ENCODE measurements at regions of chr12 and their contacts with region 1.

Region 1: DNA sequence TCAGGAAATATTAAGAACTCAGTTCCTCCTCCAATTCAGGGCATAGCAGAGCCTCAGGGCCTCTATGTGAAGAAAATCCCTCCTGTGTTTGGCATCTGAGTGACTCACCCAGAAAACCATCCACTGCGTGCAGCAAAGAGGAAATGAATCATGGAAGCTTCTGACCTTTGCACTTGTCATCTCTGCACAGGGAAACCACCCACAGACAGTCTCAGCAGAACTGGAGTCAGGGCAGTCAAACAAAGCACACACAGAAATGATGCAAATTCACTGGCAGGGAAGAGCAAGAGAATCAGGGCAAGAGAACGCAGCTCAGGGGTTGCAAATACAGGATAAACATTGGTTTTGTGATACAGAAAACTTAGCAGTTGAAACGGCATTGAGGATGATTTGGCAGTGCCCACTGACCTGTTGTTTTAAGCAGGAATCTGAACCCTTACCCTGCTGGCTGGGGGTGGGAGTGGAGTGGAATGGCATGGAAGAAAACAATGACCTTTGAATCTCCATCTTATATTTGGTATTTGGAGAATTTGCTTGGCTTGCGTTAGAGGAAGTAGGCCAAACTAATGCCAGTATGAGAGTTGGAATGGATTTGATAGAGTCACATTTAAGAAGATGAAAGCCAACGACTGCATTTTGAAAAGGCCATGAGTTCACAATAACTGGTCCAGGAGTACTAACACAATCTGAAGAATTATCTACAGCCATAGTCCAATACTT is 53.5 kb downstream of the PHLDA1 start:
- DNase-seq: peak; percentile 86
- H3K4me3 Mint-ChIP-seq: peak overlapping the region; percentile 32
- H3K27ac Mint-ChIP-seq: peak overlapping the region; percentile 92
- H3K4me1 Mint-ChIP-seq: peaks cover 68% of the 10 kb centered on the region
- H3K27me3 Mint-ChIP-seq: no peaks in the 10 kb centered on the region

Region 2: DNA sequence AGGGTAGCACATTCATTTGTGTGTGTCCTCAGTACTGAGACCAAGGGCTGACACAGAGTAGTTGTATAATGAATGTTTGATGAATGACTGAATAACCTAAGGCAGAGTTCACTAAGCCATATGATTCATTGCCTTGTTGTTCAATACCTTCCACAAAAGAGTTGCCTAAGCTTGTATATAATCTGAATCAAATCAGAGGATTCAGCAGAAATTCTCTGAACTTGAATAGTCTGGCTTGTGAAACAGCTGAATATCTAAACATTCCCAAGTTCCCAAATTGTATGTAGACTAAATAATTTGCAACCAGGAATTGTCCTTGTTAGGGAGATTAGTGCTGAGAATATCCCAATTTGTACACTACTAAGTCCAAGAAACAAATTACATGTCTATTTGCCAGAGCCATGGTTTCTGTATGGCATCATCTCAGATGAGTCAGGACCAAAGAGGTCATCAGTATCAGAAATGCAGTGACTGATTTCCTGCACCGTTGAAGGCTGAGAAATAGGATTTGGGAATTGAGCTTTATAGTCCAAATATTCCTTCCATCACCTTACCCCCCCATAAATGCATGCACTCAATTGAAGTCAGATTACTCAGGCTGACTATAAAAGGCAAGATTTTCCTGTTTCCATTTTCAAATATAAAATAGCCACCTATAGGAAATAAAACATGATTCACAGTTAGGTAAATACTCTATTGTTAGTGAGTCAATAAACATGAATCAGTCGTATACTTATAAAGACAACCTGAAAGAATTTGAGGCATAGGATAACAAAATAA is 115.2 kb before region 1 on chr12:
- CTCF ChIA-PET with region 1: no interaction called
- POLR2A ChIA-PET with region 1: no interaction called
- DNase-seq: no peak
- H3K4me3 Mint-ChIP-seq: no peak overlapping the region
- H3K27ac Mint-ChIP-seq: no peak overlapping the region
- H3K4me1 Mint-ChIP-seq: peaks cover 11% of the 10 kb centered on the region
- H3K27me3 Mint-ChIP-seq: peaks cover 1% of the 10 kb centered on the region

Region 3: DNA sequence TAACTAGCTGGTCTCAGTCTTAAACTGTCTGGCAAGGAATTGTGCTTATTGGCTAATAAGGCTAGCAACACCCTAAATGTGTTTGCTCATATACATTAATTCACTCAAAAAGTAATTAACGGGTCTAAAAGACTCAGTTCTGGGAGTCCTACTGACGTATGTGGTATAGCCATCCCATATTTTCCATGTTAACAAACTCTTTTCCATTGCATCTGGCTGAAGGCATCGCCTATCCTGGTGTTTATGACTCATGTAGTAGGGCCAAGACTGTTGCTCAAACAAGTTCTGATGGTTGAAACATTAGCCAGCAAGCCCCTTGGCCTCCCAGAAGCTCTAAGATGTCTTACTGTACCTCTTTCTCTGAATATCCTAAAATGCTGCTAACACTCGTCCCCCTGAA is 45.0 kb before region 1 on chr12:
- CTCF ChIA-PET with region 1: interaction called, 3 read pairs
- POLR2A ChIA-PET with region 1: interaction called, 46 read pairs
- DNase-seq: no peak
- H3K4me3 Mint-ChIP-seq: no peak overlapping the region
- H3K27ac Mint-ChIP-seq: no peak overlapping the region
- H3K4me1 Mint-ChIP-seq: peaks cover 34% of the 10 kb centered on the region
- H3K27me3 Mint-ChIP-seq: peaks cover 5% of the 10 kb centered on the region

Region 4: GRCh38 chr12:75939016-75939642 is 39.0 kb before region 1 on chr12:
- CTCF ChIA-PET with region 1: interaction called, 3 read pairs
- POLR2A ChIA-PET with region 1: interaction called, 46 read pairs
- DNase-seq: no peak
- H3K4me3 Mint-ChIP-seq: no peak overlapping the region
- H3K27ac Mint-ChIP-seq: no peak overlapping the region
- H3K4me1 Mint-ChIP-seq: peaks cover 23% of the 10 kb centered on the region
- H3K27me3 Mint-ChIP-seq: no peaks in the 10 kb centered on the region

Region 5: DNA sequence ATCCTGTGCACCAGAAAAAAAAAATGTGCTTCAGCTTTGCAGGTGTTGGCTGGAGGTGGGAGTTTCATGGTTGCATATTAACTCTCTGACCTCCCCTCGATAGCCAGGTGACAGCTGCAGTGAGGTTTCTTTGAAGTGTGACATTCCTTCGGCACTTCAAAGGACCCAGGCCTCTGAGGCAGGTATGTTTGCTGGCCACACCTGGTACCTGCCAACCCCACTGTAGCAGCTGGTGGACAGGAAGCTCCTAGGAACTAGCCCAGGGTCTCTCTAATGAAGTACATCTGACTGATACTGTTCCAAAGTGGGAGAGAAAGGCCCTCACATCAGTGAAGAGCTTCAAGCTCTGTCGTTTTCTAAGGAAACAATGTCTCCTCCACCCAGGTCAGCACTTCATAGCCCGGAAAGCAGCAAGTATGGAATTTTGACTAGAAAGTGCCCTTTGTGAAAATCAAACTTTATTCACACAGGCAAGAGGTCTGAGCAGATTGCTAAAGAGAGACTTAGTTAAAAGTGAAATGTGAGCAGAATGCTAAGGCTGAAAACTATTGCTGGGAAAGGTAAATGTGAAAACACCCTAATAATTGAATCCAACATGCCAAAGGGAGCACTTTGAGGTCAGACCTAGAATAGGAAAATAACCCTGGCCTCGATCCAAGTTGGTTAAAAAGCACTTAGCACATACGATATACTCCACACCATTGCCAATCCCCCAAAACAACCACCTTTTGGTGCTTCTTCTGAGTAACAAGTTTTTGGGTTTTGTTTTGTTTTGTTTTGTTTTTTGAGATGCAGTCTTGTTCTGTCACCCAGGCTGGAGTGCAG is 17.8 kb before region 1 on chr12:
- CTCF ChIA-PET with region 1: interaction called, 3 read pairs
- POLR2A ChIA-PET with region 1: interaction called, 24 read pairs
- DNase-seq: no peak
- H3K4me3 Mint-ChIP-seq: no peak overlapping the region
- H3K27ac Mint-ChIP-seq: no peak overlapping the region
- H3K4me1 Mint-ChIP-seq: peaks cover 40% of the 10 kb centered on the region
- H3K27me3 Mint-ChIP-seq: no peaks in the 10 kb centered on the region

Region 6: GRCh38 chr12:76123451-76124212 is 145.5 kb after region 1 on chr12:
- CTCF ChIA-PET with region 1: no interaction called
- POLR2A ChIA-PET with region 1: no interaction called
- DNase-seq: no peak
- H3K4me3 Mint-ChIP-seq: no peak overlapping the region
- H3K27ac Mint-ChIP-seq: no peak overlapping the region
- H3K4me1 Mint-ChIP-seq: no peaks in the 10 kb centered on the region
- H3K27me3 Mint-ChIP-seq: no peaks in the 10 kb centered on the region

Measured in activated CD4-positive, alpha-beta memory T cell treated with anti-CD3 and anti-CD28 coated beads, Interleukin-2, amount 10 ng/mL, durations not matched to agents 7 days and 5 days (primary cell).